Heart right ventricle (tissue), 16 donors: ENCODE measurements at regions of chr15 and their contacts with region 1.

Region 1: DNA sequence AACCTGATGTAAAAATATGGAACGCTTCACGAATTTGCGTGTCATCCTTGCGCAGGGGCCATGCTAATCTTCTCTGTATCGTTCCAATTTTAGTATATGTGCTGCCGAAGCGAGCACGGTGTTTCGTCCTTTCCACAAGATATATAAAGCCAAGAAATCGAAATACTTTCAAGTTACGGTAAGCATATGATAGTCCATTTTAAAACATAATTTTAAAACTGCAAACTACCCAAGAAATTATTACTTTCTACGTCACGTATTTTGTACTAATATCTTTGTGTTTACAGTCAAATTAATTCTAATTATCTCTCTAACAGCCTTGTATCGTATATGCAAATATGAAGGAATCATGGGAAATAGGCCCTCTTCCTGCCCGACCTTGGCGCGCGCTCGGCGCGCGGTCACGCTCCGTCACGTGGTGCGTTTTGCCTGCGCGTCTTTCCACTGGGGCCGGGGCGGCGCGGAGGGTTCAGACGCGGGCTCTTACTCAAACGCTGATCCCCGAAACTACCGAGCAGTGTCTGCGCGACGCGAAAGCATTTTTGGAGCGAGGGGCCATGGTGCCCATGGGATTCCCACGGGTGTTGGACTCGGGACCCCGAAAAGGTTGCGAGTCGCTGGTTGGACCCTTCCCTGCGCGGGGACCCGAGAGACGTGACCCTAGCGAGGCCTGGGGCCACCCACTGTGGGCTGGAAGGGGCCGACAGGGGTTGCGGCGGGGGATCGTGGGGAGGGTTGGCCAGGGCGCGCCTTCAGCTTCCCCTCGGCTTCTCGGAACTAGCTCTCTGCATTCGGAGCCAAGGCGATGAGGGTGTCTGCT is at the start of gene RNU6-1:
- DNase-seq: peak; percentile 94 to 95
- ATAC-seq: peak; percentile 93 to 97 (median 94)
- H3K4me3 ChIP-seq: peak within 1 kb of the TSS; percentile 53 to 92 (median 88)
- H3K27ac ChIP-seq: peak within 1 kb of the TSS; percentile 82 to 98 (median 96)
- H3K4me1 ChIP-seq: peaks cover 6 to 39% (median 30%) of the 10 kb centered on the region in 9 donors
- H3K27me3 ChIP-seq: peaks cover 0 to 13% (median 11%) of the 10 kb centered on the region in 7 donors
- CTCF ChIP-seq: no peak
- total RNA-seq, gene RNU6-1: not detected

Region 2: GRCh38 chr15:67456677-67457529 is 383.2 kb before region 1 on chr15:
- intact Hi-C with region 1: loop called (anchors 1 to 5 kb)
- DNase-seq: peak; percentile 83
- ATAC-seq: peak; percentile 78 to 90 (median 86)
- H3K4me3 ChIP-seq: no peak overlapping the region
- H3K27ac ChIP-seq: no peak overlapping the region
- H3K4me1 ChIP-seq: peaks cover 0 to 6% (median 0%) of the 10 kb centered on the region in 9 donors
- H3K27me3 ChIP-seq: no peaks in the 10 kb centered on the region
- CTCF ChIP-seq: peak; percentile 60 to 93 (median 91)

Region 3: DNA sequence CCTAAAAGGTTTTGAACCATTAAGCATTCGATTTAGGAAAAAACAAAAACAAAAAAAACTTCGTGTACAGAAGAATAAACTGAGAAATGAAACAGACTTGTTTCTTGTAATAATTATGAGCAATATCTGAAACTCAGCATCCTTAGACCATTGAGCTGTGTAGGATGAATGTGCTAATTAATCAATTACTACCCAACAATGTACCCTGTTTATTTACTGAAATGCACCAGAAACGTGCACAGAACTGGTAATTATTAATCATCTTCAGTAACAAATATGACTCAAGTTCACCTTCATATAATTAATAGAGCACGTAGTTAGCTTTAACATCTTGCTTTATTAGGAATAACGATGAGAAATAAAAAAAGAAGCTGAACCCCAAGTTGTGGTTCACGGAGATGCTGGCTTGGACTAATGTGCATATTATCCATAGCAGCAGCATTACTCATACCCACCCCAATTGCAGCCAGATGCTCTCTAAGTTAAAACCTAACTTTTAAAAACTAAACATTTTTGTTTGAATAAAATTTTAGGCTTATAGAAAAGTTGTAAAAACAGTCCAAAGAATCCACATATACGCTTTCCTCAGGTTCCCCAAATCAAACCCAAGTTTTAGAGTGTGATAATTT is 329.4 kb before region 1 on chr15:
- intact Hi-C with region 1: loop called in 1 of 10 experiments (anchors 10 kb)
- DNase-seq: no peak
- ATAC-seq: no peak
- H3K4me3 ChIP-seq: no peak overlapping the region
- H3K27ac ChIP-seq: no peak overlapping the region
- H3K4me1 ChIP-seq: peaks cover 0 to 17% (median 0%) of the 10 kb centered on the region in 9 donors
- H3K27me3 ChIP-seq: no peaks in the 10 kb centered on the region
- CTCF ChIP-seq: no peak

Region 4: GRCh38 chr15:67542420-67543347 is 297.5 kb before region 1 on chr15 and contains the start of gene MAP2K5:
- intact Hi-C with region 1: loop called in 1 of 10 experiments (anchors 5 kb)
- DNase-seq: peak; percentile 90 to 91
- ATAC-seq: peak; percentile 89 to 98 (median 95)
- H3K4me3 ChIP-seq: peak within 1 kb of the TSS; percentile 56 to 95 (median 84)
- H3K27ac ChIP-seq: peak within 1 kb of the TSS; percentile 81 to 94 (median 90)
- H3K4me1 ChIP-seq: peaks cover 5 to 30% (median 14%) of the 10 kb centered on the region in 9 donors
- H3K27me3 ChIP-seq: no peaks in the 10 kb centered on the region
- CTCF ChIP-seq: peak in 2 of 9 donors; percentile 6 to 15
- total RNA-seq, gene MAP2K5: 14.4 to 34.3 (median 21.4) TPM

Region 5: GRCh38 chr15:67731112-67731761 is 108.9 kb before region 1 on chr15:
- intact Hi-C with region 1: no loop called
- DNase-seq: no peak
- ATAC-seq: peak in 1 of 8 donors; percentile 10
- H3K4me3 ChIP-seq: no peak overlapping the region
- H3K27ac ChIP-seq: no peak overlapping the region
- H3K4me1 ChIP-seq: peaks cover 0 to 10% (median 0%) of the 10 kb centered on the region in 9 donors
- H3K27me3 ChIP-seq: no peaks in the 10 kb centered on the region
- CTCF ChIP-seq: no peak